CD8-positive, alpha-beta T cell (primary cell): ENCODE measurements at regions of chr19 and their contacts with region 1.

Region 1: GRCh38 chr19:16197622-16198369 is at the start of gene AP1M1:
- DNase-seq: peak; percentile 95 to 99 (median 98)
- ATAC-seq: peak; percentile 82
- H3K4me3 ChIP-seq: peak within 1 kb of the TSS; percentile 98 to 99
- H3K4me3 Mint-ChIP-seq: peak within 1 kb of the TSS; percentile 93
- H3K27ac ChIP-seq: peak within 1 kb of the TSS; percentile 87 to 98
- H3K27ac Mint-ChIP-seq: peak within 1 kb of the TSS; percentile 97
- H3K4me1 ChIP-seq: peaks cover 54% of the 10 kb centered on the region
- H3K4me1 Mint-ChIP-seq: peaks cover 49% of the 10 kb centered on the region
- H3K27me3 ChIP-seq: no peaks in the 10 kb centered on the region
- H3K27me3 Mint-ChIP-seq: no peaks in the 10 kb centered on the region
- CTCF ChIP-seq: no peak
- total RNA-seq, gene AP1M1: 76.2 to 83.4 TPM

Region 2: DNA sequence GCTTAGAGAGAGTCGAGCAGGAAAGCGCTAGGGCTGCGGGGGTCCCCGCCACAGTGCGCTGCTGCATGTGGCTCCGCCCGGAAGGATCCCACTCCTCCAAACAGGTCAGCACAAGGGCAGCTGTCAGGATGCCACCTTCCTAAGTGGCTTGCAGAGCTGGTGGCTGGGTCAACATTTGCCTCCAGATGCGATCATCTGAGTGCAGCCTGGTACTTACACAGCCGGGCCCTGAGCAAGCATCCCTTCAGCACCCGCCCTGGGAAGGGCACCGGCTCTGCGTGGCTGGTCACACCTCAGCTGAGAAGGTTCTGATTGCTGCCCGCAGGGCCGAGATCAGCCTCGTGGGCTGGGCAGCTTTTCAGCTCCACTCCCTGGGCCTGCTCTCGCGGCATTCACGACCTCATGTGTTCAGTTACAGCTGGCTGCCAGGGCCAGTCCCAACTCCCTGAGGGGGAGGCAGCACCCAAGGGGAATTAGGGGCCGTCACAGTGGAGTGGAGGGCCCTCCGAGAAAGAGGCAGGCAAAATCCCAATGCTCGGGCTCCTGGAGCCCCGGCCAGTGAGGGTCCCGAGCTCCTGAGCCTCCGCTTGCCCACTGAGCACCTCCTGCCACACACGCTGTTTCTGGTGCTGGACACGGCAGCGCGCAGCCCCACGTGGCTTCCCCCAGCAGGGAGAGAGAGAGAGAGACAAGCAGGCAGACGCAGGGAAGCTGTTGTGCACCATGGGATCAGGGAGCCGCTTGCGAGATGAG is 26.7 kb after region 1 on chr19:
- CTCF ChIA-PET with region 1: no interaction called
- POLR2A ChIA-PET with region 1: no interaction called
- intact Hi-C with region 1: no loop called
- DNase-seq: peak in 1 of 9 experiments; percentile 3
- ATAC-seq: no peak
- H3K4me3 ChIP-seq: no peak overlapping the region
- H3K4me3 Mint-ChIP-seq: no peak overlapping the region
- H3K27ac ChIP-seq: no peak overlapping the region
- H3K27ac Mint-ChIP-seq: no peak overlapping the region
- H3K4me1 ChIP-seq: no peaks in the 10 kb centered on the region
- H3K4me1 Mint-ChIP-seq: peaks cover 6% of the 10 kb centered on the region
- H3K27me3 ChIP-seq: no peaks in the 10 kb centered on the region
- H3K27me3 Mint-ChIP-seq: no peaks in the 10 kb centered on the region
- CTCF ChIP-seq: no peak

Region 3: GRCh38 chr19:16235811-16236652 is 38.2 kb after region 1 on chr19:
- CTCF ChIA-PET with region 1: no interaction called
- POLR2A ChIA-PET with region 1: interaction called, 3 read pairs
- intact Hi-C with region 1: loop called in 1 of 2 experiments (anchors 5 kb)
- DNase-seq: peak in 2 of 9 experiments; percentile 48 to 63
- ATAC-seq: peak; percentile 64
- H3K4me3 ChIP-seq: no peak overlapping the region
- H3K4me3 Mint-ChIP-seq: peak overlapping the region; percentile 40
- H3K27ac ChIP-seq: peak overlapping the region; percentile 31 to 33
- H3K27ac Mint-ChIP-seq: peak overlapping the region; percentile 96
- H3K4me1 ChIP-seq: peaks cover 63% of the 10 kb centered on the region
- H3K4me1 Mint-ChIP-seq: peaks cover 58% of the 10 kb centered on the region
- H3K27me3 ChIP-seq: no peaks in the 10 kb centered on the region
- H3K27me3 Mint-ChIP-seq: no peaks in the 10 kb centered on the region
- CTCF ChIP-seq: no peak

Region 4: GRCh38 chr19:16262618-16263017 is 64.8 kb after region 1 on chr19:
- CTCF ChIA-PET with region 1: no interaction called
- POLR2A ChIA-PET with region 1: no interaction called
- intact Hi-C with region 1: no loop called
- DNase-seq: no peak
- ATAC-seq: no peak
- H3K4me3 ChIP-seq: no peak overlapping the region
- H3K4me3 Mint-ChIP-seq: peak overlapping the region; percentile 54
- H3K27ac ChIP-seq: no peak overlapping the region
- H3K27ac Mint-ChIP-seq: no peak overlapping the region
- H3K4me1 ChIP-seq: peaks cover 68% of the 10 kb centered on the region
- H3K4me1 Mint-ChIP-seq: peaks cover 63% of the 10 kb centered on the region
- H3K27me3 ChIP-seq: no peaks in the 10 kb centered on the region
- H3K27me3 Mint-ChIP-seq: no peaks in the 10 kb centered on the region
- CTCF ChIP-seq: no peak

Region 5: DNA sequence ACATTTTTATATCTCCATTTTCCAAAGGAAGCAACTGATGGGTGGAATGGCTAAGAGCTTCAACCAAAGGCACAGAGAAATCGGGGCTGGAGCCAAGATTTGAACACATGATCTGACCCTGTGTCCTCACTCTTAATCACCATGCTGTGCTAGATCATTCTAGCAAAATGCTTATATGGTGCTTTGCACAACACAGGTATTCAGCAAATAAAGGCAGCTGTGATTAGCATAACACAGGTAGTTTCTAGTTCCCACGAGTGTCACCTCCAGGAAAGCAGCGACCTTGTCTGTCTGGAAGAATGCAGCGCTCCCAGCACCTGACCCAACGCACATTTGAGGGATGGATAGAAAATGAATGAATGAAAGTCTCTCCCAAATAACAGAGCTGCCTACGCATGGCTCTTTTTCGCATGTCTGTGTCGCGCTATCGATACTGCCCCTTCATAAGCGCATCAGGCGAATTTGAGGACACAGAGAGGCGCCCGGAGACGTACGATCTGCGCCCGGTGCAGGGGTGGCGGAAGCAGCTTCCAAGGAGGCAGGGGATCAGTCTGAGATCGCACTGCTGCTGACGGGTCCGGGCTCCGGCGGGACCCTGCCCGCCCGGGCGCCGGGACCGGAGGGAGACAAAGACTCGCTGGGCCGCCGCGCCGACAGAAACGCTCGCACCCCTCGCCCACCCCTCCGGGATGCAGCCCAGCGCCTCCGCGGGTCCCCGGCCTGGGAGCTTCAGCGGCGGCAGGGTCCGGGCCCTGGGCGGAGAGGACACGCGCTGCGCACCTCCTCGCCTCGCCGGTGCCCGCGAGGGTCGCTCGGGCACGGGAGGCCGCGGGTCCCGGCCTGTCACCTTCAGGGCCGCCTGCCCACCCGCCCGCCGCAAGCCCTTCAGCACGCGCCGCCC is 273.4 kb after region 1 on chr19:
- CTCF ChIA-PET with region 1: no interaction called
- POLR2A ChIA-PET with region 1: no interaction called
- intact Hi-C with region 1: loop called (anchors 5 kb)
- DNase-seq: peak in 4 of 9 experiments; percentile 20 to 54 (median 39)
- ATAC-seq: peak; percentile 9
- H3K4me3 ChIP-seq: peak overlapping the region; percentile 50 to 69
- H3K4me3 Mint-ChIP-seq: peak overlapping the region; percentile 88
- H3K27ac ChIP-seq: peak overlapping the region in 1 of 2 experiments; percentile 33
- H3K27ac Mint-ChIP-seq: peak overlapping the region; percentile 57
- H3K4me1 ChIP-seq: peaks cover 21% of the 10 kb centered on the region
- H3K4me1 Mint-ChIP-seq: peaks cover 38% of the 10 kb centered on the region
- H3K27me3 ChIP-seq: no peaks in the 10 kb centered on the region
- H3K27me3 Mint-ChIP-seq: peaks cover 2% of the 10 kb centered on the region
- CTCF ChIP-seq: no peak